HEK293 (cell line): ENCODE measurements at regions of chr1 and their contacts with region 1.

Region 1: GRCh38 chr1:228073857-228074545 is 8.5 kb upstream of the ARF1 start:
- H3K4me3 ChIP-seq: no peak overlapping the region
- H3K27ac ChIP-seq: no peak overlapping the region
- H3K4me1 ChIP-seq: no peaks in the 10 kb centered on the region
- CTCF ChIP-seq: peak; percentile 37

Region 2: GRCh38 chr1:228004331-228004855 is 69.6 kb before region 1 on chr1:
- CTCF ChIA-PET with region 1: interaction called, 27 read pairs
- POLR2A ChIA-PET with region 1: no interaction called
- H3K4me3 ChIP-seq: no peak overlapping the region
- H3K27ac ChIP-seq: no peak overlapping the region
- H3K4me1 ChIP-seq: peaks cover 4% of the 10 kb centered on the region
- CTCF ChIP-seq: peak; percentile 47; the same call in 1 of the 2 replicates

Region 3: GRCh38 chr1:228059634-228060457 is 14.2 kb before region 1 on chr1:
- CTCF ChIA-PET with region 1: no interaction called
- POLR2A ChIA-PET with region 1: interaction called, 12 read pairs
- H3K4me3 ChIP-seq: peak overlapping the region; percentile 40
- H3K27ac ChIP-seq: peak overlapping the region; percentile 26; the same call in 1 of the 2 replicates
- H3K4me1 ChIP-seq: peaks cover 4% of the 10 kb centered on the region
- CTCF ChIP-seq: no peak